ENCODE measurements at regions of chr1 and their contacts with region 1.

Region 1: DNA sequence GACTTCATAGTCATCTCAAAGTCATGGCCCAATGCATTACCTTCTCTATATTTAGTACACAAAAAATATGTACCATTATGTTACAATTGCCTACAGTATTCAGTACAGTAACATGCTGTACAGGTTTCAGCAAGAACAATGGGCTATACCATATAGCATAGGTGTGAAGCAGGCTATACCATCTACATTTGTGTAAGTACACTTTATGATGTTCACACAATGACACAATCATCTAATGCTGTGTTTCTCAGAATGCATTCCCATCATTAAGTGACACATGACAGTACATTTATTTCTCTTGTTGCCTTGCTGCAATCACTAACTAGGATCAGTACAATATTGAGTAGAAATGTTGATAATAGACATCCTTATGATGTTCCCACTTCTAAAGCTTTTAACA is 46.5 kb upstream of the NFIA start:
- DNase-seq: no peak
- H3K4me3 ChIP-seq: no peak overlapping the region
- H3K27ac ChIP-seq: no peak overlapping the region
- H3K4me1 ChIP-seq: no peaks in the 10 kb centered on the region
- H3K27me3 ChIP-seq: no peaks in the 10 kb centered on the region
- CTCF ChIP-seq: no peak
- EP300 ChIP-seq: no peak
- POLR2A ChIP-seq: no peak

Region 2: GRCh38 chr1:60596791-60597747 is 438.8 kb before region 1 on chr1:
- in situ Hi-C with region 1: no loop called
- intact Hi-C with region 1: no loop called
- DNase-seq: no peak
- H3K4me3 ChIP-seq: no peak overlapping the region
- H3K27ac ChIP-seq: no peak overlapping the region
- H3K4me1 ChIP-seq: no peaks in the 10 kb centered on the region
- H3K27me3 ChIP-seq: no peaks in the 10 kb centered on the region
- CTCF ChIP-seq: no peak
- EP300 ChIP-seq: no peak
- POLR2A ChIP-seq: no peak

Region 3: GRCh38 chr1:60857851-60858250 is 178.0 kb before region 1 on chr1:
- in situ Hi-C with region 1: loop called in 2 of 4 experiments (anchors 10 to 25 kb)
- intact Hi-C with region 1: no loop called
- DNase-seq: no peak
- H3K4me3 ChIP-seq: no peak overlapping the region
- H3K27ac ChIP-seq: no peak overlapping the region
- H3K4me1 ChIP-seq: no peaks in the 10 kb centered on the region
- H3K27me3 ChIP-seq: no peaks in the 10 kb centered on the region
- CTCF ChIP-seq: no peak
- EP300 ChIP-seq: no peak
- POLR2A ChIP-seq: no peak

Region 4: DNA sequence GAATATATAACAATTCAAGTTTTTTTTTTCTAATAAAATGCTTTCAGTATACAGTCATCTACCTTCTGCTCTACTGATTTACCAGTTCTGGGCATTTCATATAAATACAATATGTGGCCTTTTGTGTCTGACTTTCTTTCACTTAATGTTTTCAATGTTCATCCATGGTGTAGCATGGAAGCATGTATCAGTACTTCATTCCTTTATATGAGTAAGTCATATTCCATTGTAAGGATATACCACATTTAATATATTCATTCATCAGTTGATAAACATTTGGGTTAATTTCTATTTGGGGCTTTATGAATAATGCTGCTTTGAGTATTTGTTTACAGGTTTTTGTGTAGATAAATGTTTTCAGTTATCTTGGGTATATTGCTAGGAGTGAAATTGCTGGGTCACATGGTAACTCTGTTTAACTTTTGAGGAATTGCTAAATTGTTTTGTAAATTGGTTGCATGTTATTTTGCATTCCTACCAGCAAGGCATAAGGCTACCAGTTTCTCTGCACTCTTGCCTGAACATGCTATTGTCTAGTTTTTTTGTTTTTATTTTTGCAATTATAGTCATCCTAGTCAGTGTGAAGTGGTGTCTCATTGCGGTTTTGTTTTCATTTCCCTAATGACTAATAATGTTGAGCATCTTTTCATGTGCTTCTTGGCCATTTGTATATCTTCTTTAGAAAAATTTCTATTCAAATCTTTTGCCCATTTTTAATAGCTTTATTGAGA is 483.0 kb after region 1 on chr1:
- in situ Hi-C with region 1: no loop called
- intact Hi-C with region 1: no loop called
- DNase-seq: no peak
- H3K4me3 ChIP-seq: no peak overlapping the region
- H3K27ac ChIP-seq: no peak overlapping the region
- H3K4me1 ChIP-seq: no peaks in the 10 kb centered on the region
- H3K27me3 ChIP-seq: no peaks in the 10 kb centered on the region
- CTCF ChIP-seq: no peak
- EP300 ChIP-seq: no peak
- POLR2A ChIP-seq: no peak

Measured in transverse colon (tissue), 4 donors.